Activated CD8-positive, alpha-beta memory T cell treated with anti-CD3 and anti-CD28 coated beads, Interleukin-2, amount 10 ng/mL, durations not matched to agents 7 days and 5 days (primary cell): ENCODE measurements at regions of chr2 and their contacts with region 1.

Region 1: DNA sequence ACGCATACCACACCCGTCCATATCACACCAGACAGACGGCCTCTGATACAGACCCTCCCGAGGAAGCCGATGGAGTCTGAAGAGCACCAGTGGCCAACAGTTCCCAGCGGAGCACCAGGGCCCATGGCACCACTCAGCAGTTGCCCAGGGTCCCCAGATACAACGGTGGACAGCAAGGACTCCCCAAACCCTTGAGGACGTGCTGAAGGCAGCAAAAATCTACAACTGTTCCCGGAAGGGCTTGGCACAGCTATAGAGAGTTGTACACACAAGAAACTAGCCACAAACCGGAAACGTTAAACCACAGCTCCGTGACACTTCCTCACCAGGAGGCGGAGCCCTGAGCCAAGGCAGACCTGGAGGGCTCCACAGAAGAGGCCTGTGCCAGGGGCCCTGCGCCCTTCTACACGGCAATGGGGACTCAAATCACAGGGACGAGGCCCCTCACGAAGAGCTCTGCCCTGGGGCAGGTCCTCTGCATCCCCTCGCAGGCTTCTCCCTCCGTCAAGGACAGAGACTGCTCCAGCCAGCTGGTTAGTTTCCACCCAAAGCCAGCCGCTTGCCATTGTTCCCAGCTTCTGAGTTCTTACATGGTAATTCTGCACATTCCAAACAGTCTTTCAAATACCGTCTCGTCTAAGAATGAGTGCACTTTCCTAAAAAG is 133.4 kb downstream of the HDAC4 start:
- DNase-seq: peak; percentile 98
- ATAC-seq: peak; percentile 82
- H3K4me3 Mint-ChIP-seq: peak overlapping the region; percentile 90
- H3K27ac Mint-ChIP-seq: peak overlapping the region; percentile 97
- H3K4me1 Mint-ChIP-seq: peaks cover 78% of the 10 kb centered on the region
- H3K27me3 Mint-ChIP-seq: peaks cover 4% of the 10 kb centered on the region

Region 2: GRCh38 chr2:239143858-239144718 is 123.3 kb before region 1 on chr2:
- CTCF ChIA-PET with region 1: interaction called, 12 read pairs
- DNase-seq: peak; percentile 45
- ATAC-seq: peak; percentile 45
- H3K4me3 Mint-ChIP-seq: no peak overlapping the region
- H3K27ac Mint-ChIP-seq: no peak overlapping the region
- H3K4me1 Mint-ChIP-seq: peaks cover 17% of the 10 kb centered on the region
- H3K27me3 Mint-ChIP-seq: no peaks in the 10 kb centered on the region

Region 3: DNA sequence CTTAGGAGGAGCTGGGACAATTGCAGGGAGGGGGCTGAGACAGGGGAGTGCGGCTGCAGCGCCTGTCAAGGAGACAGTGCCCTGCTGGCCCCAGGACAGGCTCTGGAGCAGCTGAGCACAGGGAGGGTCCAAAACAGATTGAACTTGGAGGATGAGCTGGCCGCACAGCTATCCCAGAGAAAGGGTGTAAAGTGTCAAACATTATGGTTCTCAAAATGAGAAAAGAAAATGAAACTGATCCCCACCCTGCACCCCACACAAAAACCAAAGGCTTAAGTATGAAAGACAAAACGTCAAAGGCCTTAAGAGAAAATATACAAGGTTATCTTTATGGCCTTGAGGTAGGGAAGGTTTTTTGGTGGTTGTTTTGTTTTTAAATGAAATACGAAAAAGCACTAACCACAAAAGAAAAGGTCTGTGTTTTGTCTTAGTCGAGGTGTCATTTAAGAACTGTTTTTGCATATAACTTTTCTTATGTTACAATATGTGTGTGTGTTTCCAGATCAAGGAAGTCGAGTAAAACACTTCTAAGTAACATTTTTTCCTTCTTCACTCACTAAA is 21.6 kb after region 1 on chr2:
- CTCF ChIA-PET with region 1: interaction called, 18 read pairs
- DNase-seq: peak; percentile 79
- ATAC-seq: peak; percentile 76
- H3K4me3 Mint-ChIP-seq: peak overlapping the region; percentile 73
- H3K27ac Mint-ChIP-seq: peak overlapping the region; percentile 100
- H3K4me1 Mint-ChIP-seq: peaks cover 76% of the 10 kb centered on the region
- H3K27me3 Mint-ChIP-seq: peaks cover 5% of the 10 kb centered on the region

Region 4: DNA sequence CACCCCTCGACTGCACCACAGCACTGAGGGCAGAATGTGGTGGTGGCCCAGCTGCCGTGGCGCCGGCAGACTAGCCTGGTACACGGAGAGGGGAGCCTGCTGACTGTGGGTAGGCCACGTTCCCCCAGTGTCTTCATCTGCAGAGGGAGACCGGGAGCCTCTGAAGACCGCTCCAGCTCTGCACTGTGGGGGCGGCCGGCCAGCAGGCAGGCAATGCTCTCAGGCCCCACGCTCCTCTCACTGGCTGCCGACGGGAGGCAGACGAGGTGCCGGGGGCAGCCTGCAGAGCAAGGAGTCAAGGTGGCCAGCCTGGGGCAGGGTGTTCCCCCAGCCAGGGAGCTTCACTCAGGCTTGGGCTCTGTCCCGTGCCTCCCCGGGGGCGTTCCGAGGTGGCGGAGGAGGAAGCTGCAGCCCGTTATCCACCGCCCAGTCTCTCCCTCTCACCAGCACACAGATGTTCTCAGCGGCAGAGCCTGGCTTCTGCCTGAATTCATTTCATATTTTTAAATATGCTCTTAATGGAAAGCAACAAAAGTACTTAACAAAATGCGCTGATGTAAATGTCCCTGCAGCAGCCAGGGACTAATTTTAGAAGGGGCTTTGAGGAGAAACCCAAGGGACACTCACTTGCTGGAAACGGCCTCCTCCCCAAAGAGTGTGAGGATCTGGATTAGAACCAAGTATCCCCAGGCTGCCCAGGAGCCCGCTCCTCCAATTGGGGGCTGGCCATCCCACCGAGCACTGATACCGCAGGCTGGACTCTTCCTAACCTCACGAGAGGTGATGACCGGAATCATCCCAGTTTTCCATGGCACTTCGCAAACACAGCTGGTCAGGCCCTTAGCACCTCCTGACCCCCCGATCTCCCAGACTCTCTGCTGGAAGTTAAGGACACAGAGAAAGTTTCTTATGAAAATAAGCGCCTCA is 45.6 kb after region 1 on chr2:
- CTCF ChIA-PET with region 1: no interaction called
- DNase-seq: peak; percentile 36
- ATAC-seq: no peak
- H3K4me3 Mint-ChIP-seq: no peak overlapping the region
- H3K27ac Mint-ChIP-seq: no peak overlapping the region
- H3K4me1 Mint-ChIP-seq: peaks cover 27% of the 10 kb centered on the region
- H3K27me3 Mint-ChIP-seq: no peaks in the 10 kb centered on the region

Region 5: DNA sequence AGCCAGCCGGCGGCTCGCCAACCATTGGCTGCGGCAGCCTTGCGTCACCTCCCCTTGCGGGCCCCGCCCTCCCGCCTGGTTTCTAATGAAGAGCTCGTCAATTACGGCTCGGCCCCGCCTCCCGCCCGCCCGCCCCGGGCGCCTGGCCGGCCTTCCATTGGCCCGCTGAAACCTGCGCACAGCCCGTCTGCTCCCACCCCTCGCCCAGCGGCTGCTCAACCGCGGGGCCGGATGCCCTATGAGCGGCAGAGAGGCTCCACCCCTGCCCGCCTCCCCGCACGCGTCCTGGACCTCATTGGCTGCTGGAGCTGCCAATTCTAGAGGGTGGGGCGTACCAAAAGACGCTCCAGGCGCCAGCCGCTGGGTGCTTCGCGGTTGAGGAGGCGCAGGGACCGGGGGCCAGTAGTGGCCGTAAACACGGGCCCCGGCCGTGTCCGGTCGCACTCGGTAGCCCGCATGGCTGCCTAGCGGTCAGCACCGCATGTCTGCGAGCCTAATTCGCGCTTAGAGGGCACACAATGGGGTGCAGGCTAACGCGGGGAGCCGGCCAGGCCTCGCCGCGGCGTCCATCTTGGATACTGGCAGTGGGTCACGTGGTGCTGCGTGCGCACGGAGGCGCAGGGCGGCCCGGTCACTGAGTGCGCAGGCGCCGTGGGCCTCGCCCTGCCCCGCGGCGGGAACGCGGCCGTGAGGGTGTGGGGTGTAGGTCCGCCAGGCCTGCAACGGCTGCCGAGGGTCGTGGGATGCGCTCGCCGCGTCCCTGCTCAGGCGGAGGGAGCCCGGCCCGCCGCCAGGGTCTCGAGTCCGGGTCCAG is 133.9 kb after region 1 on chr2:
- CTCF ChIA-PET with region 1: interaction called, 12 read pairs
- DNase-seq: peak; percentile 99
- ATAC-seq: peak; percentile 92
- H3K4me3 Mint-ChIP-seq: peak overlapping the region; percentile 84
- H3K27ac Mint-ChIP-seq: peak overlapping the region; percentile 95
- H3K4me1 Mint-ChIP-seq: peaks cover 32% of the 10 kb centered on the region
- H3K27me3 Mint-ChIP-seq: peaks cover 14% of the 10 kb centered on the region